Naive thymus-derived CD4-positive, alpha-beta T cell (primary cell): ENCODE measurements at regions of chr6 and their contacts with region 1.

Region 1: GRCh38 chr6:31739639-31740396 is at the start of gene MSH5:
- DNase-seq: peak; percentile 82 to 97 (median 92)
- ATAC-seq: peak; percentile 93
- H3K4me3 ChIP-seq: peak within 1 kb of the TSS; percentile 68
- H3K4me3 Mint-ChIP-seq: peak within 1 kb of the TSS; percentile 86 to 100 (median 98)
- H3K27ac ChIP-seq: peak within 1 kb of the TSS; percentile 69
- H3K27ac Mint-ChIP-seq: peak within 1 kb of the TSS; percentile 83 to 94 (median 90)
- H3K4me1 ChIP-seq: peaks cover 32 to 33% of the 10 kb centered on the region in 2 donors
- H3K4me1 Mint-ChIP-seq: peaks cover 41 to 69% (median 61%) of the 10 kb centered on the region in 7 donors
- H3K27me3 ChIP-seq: no peaks in the 10 kb centered on the region
- H3K27me3 Mint-ChIP-seq: no peaks in the 10 kb centered on the region
- total RNA-seq, gene MSH5: 10.3 to 52.2 (median 11.4) TPM

Region 2: DNA sequence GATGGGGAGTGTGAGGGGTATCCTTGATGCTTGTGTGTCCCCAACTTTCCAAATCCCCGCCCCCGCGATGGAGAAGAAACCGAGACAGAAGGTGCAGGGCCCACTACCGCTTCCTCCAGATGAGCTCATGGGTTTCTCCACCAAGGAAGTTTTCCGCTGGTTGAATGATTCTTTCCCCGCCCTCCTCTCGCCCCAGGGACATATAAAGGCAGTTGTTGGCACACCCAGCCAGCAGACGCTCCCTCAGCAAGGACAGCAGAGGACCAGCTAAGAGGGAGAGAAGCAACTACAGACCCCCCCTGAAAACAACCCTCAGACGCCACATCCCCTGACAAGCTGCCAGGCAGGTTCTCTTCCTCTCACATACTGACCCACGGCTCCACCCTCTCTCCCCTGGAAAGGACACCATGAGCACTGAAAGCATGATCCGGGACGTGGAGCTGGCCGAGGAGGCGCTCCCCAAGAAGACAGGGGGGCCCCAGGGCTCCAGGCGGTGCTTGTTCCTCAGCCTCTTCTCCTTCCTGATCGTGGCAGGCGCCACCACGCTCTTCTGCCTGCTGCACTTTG is 164.4 kb before region 1 on chr6 and contains the start of gene TNF:
- CTCF ChIA-PET with region 1: interaction called, 3 read pairs
- POLR2A ChIA-PET with region 1: no interaction called
- intact Hi-C with region 1: loop called in 1 of 2 experiments (anchors 5 kb)
- DNase-seq: peak in 4 of 9 donors; percentile 37 to 89 (median 59)
- ATAC-seq: peak; percentile 26
- H3K4me3 ChIP-seq: peak within 1 kb of the TSS; percentile 77
- H3K4me3 Mint-ChIP-seq: peak within 1 kb of the TSS; percentile 85 to 99 (median 94)
- H3K27ac ChIP-seq: peak within 1 kb of the TSS; percentile 97
- H3K27ac Mint-ChIP-seq: peak within 1 kb of the TSS; percentile 91 to 99 (median 99)
- H3K4me1 ChIP-seq: peaks cover 62 to 71% of the 10 kb centered on the region in 2 donors
- H3K4me1 Mint-ChIP-seq: peaks cover 54 to 98% (median 90%) of the 10 kb centered on the region in 7 donors
- H3K27me3 ChIP-seq: no peaks in the 10 kb centered on the region
- H3K27me3 Mint-ChIP-seq: peaks cover 0 to 3% (median 0%) of the 10 kb centered on the region in 5 donors
- total RNA-seq, gene TNF: 5.4 to 125 (median 8.7) TPM

Region 3: GRCh38 chr6:31680840-31681671 is 58.8 kb before region 1 on chr6 and contains the start of gene LY6G5C:
- CTCF ChIA-PET with region 1: no interaction called
- POLR2A ChIA-PET with region 1: no interaction called
- intact Hi-C with region 1: loop called in 1 of 2 experiments (anchors 5 kb)
- DNase-seq: peak in 8 of 9 donors; percentile 28 to 65 (median 48)
- ATAC-seq: peak; percentile 80
- H3K4me3 ChIP-seq: peak within 1 kb of the TSS; percentile 78
- H3K4me3 Mint-ChIP-seq: peak within 1 kb of the TSS; percentile 86 to 98 (median 90)
- H3K27ac ChIP-seq: peak within 1 kb of the TSS; percentile 68
- H3K27ac Mint-ChIP-seq: peak within 1 kb of the TSS; percentile 60 to 86 (median 68)
- H3K4me1 ChIP-seq: peaks cover 15 to 16% of the 10 kb centered on the region in 2 donors
- H3K4me1 Mint-ChIP-seq: peaks cover 14 to 32% (median 19%) of the 10 kb centered on the region in 7 donors
- H3K27me3 ChIP-seq: no peaks in the 10 kb centered on the region
- H3K27me3 Mint-ChIP-seq: no peaks in the 10 kb centered on the region
- total RNA-seq, gene LY6G5C: 2.4 to 4.3 (median 3.1) TPM

Region 4: DNA sequence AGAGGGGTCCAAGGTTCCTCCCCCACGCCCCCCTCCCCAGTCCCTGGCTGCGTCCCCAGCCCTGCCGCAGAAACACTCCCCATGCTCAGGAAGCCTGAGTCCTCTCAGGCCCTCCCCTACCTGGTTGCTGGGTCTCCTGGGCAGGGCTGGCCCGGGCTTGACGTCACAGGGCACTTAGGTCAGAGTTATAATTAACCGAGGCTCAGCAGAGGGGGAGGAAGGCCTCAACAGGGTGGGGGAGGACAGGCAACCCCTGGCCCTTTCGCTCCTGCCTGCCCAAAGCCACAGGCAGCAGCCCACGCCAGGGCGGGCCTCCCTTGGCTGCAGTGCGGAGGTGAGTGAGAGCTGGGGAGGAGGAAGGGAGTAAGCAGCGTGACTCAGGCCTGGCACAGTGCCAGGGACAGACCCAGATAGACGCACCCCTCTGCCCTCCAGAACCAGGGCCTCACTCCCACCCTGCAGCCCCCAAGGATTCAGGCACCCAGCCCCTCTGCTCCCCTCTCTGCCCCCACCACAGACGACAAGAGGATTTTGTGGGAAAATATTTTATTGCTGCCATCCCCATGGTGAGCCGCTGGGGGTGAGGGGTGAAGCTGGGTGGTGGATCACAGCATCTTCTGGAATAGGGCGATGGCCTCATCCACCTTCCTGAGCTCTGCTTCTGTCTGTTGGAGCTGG is 37.3 kb after region 1 on chr6 and contains the start of gene VWA7:
- CTCF ChIA-PET with region 1: interaction called, 5 read pairs
- POLR2A ChIA-PET with region 1: interaction called, 6 read pairs
- intact Hi-C with region 1: loop called in 1 of 2 experiments (anchors 2 kb)
- DNase-seq: peak in 5 of 9 donors; percentile 23 to 84 (median 32)
- ATAC-seq: peak; percentile 80
- H3K4me3 ChIP-seq: peak within 1 kb of the TSS; percentile 24
- H3K4me3 Mint-ChIP-seq: peak within 1 kb of the TSS in 3 of 10 donors; percentile 57 to 65 (median 63)
- H3K27ac ChIP-seq: no peak within 1 kb of the TSS
- H3K27ac Mint-ChIP-seq: peak within 1 kb of the TSS in 1 of 9 donors; percentile 83
- H3K4me1 ChIP-seq: peaks cover 27% of the 10 kb centered on the region in 2 donors
- H3K4me1 Mint-ChIP-seq: peaks cover 5 to 36% (median 33%) of the 10 kb centered on the region in 7 donors
- H3K27me3 ChIP-seq: no peaks in the 10 kb centered on the region
- H3K27me3 Mint-ChIP-seq: no peaks in the 10 kb centered on the region
- total RNA-seq, gene VWA7: 0.53 to 4.5 (median 1.1) TPM

Region 5: GRCh38 chr6:31827286-31828079 is 87.7 kb after region 1 on chr6 and contains the start of gene HSPA1B:
- CTCF ChIA-PET with region 1: interaction called, 7 read pairs
- POLR2A ChIA-PET with region 1: interaction called, 9 read pairs
- intact Hi-C with region 1: loop called (anchors 2 kb)
- DNase-seq: peak; percentile 55 to 96 (median 82)
- ATAC-seq: peak; percentile 80
- H3K4me3 ChIP-seq: peak within 1 kb of the TSS; percentile 74
- H3K4me3 Mint-ChIP-seq: peak within 1 kb of the TSS; percentile 85 to 97 (median 90)
- H3K27ac ChIP-seq: peak within 1 kb of the TSS; percentile 72
- H3K27ac Mint-ChIP-seq: peak within 1 kb of the TSS; percentile 93 to 99 (median 97)
- H3K4me1 ChIP-seq: peaks cover 12 to 17% of the 10 kb centered on the region in 2 donors
- H3K4me1 Mint-ChIP-seq: peaks cover 11 to 51% (median 46%) of the 10 kb centered on the region in 7 donors
- H3K27me3 ChIP-seq: no peaks in the 10 kb centered on the region
- H3K27me3 Mint-ChIP-seq: no peaks in the 10 kb centered on the region
- total RNA-seq, gene HSPA1B: 8.6 to 68.9 (median 28.9) TPM

Region 6: DNA sequence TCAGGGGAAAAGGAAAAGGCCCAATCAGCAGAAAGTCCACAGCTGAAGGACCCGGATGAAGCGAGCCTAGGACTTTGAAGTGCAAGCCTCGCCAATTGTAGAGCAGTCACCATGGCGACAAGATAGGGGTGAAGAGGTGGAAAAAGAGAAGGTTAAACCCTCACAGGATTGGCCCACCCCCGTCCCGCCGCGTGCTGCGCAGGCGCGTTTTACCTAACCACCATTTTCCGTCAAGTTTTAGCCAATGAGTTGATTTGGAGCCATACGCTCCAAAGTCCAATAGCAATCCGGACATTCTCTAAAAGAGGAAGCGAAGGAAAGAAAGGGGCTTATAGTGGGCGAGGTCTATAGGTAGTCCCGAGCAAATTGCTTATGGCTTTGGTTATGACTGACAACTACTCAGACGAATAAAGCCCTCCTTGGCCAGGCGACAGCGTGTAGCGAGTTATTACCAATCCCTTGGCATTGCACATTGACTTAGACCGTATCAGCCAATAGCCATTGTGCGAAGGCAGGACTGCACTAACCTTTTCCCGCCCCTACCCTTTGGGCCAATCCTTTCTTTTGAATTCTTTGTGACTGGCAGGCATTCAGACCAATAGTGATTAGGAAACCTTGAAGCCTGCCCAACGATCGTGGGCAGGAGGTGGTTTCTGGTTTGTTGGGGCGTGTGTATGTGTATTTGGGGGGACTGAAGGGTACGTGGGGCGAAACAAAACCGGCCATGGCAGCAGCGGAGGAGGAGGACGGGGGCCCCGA is 438.1 kb after region 1 on chr6 and contains the start of gene RNF5:
- CTCF ChIA-PET with region 1: no interaction called
- POLR2A ChIA-PET with region 1: no interaction called
- intact Hi-C with region 1: loop called in 1 of 2 experiments (anchors 5 kb)
- DNase-seq: peak; percentile 60 to 99 (median 97)
- ATAC-seq: peak; percentile 89
- H3K4me3 ChIP-seq: peak within 1 kb of the TSS; percentile 82
- H3K4me3 Mint-ChIP-seq: peak within 1 kb of the TSS; percentile 85 to 98 (median 95)
- H3K27ac ChIP-seq: peak within 1 kb of the TSS; percentile 91
- H3K27ac Mint-ChIP-seq: peak within 1 kb of the TSS; percentile 87 to 100 (median 95)
- H3K4me1 ChIP-seq: peaks cover 31 to 63% of the 10 kb centered on the region in 2 donors
- H3K4me1 Mint-ChIP-seq: peaks cover 63 to 86% (median 69%) of the 10 kb centered on the region in 7 donors
- H3K27me3 ChIP-seq: no peaks in the 10 kb centered on the region
- H3K27me3 Mint-ChIP-seq: no peaks in the 10 kb centered on the region
- total RNA-seq, gene RNF5: 17.0 to 50.6 (median 40.9) TPM